Prostate gland (tissue), 2 donors: ENCODE measurements at regions of chr7 and their contacts with region 1.

Region 1: GRCh38 chr7:90155206-90155605 is 937 bp downstream of the STEAP1 start:
- DNase-seq: no peak
- H3K4me3 ChIP-seq: peak overlapping the region; percentile 68
- H3K27ac ChIP-seq: peak overlapping the region; percentile 94 to 97
- H3K4me1 ChIP-seq: no peaks in the 10 kb centered on the region
- H3K27me3 ChIP-seq: no peaks in the 10 kb centered on the region
- CTCF ChIP-seq: no peak
- POLR2A ChIP-seq: no peak

Region 2: GRCh38 chr7:90262438-90262837 is 107.2 kb after region 1 on chr7:
- intact Hi-C with region 1: loop called (anchors 5 kb)
- DNase-seq: no peak
- H3K4me3 ChIP-seq: no peak overlapping the region
- H3K27ac ChIP-seq: peak overlapping the region in 1 of 2 donors; percentile 38
- H3K4me1 ChIP-seq: no peaks in the 10 kb centered on the region
- H3K27me3 ChIP-seq: no peaks in the 10 kb centered on the region
- CTCF ChIP-seq: peak in 3 of 4 experiments; percentile 30 to 80 (median 70)
- POLR2A ChIP-seq: no peak